ENCODE measurements at regions of chr6 and their contacts with region 1.

Region 1: DNA sequence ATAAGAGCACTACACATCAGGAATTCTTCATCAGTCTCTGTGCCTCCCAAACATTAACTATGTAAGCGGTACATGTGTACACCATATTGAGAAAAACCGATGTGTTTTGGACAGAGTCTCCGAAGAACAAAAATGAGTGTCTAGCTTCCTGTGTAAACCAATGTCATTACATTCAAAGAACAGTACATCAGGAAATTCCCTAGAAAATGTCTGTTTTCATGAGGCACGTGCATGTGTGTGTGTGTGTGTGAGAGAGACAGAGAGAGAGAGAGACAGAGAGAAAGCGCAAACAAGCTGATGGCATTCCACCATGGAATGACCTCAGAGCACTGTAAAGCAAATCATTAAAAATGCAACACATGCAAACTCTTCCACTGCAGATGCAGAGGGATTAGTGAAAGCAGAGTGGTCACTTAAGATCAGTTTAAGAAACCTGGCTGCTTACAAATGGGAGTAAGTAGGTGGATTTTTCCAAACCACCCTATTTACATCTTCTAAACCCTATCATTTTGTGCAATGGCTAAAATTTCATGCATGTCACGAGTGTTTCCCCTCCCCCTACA is 133.9 kb downstream of the HIVEP2 start:
- DNase-seq: no peak
- ATAC-seq: no peak

Region 2: GRCh38 chr6:142763205-142763604 is 47.8 kb before region 1 on chr6:
- intact Hi-C with region 1: loop called (anchors 5 kb)
- DNase-seq: no peak
- ATAC-seq: no peak

Region 3: GRCh38 chr6:142845624-142846458 is 34.8 kb after region 1 on chr6:
- intact Hi-C with region 1: no loop called
- DNase-seq: peak; percentile 95
- ATAC-seq: peak; percentile 95

Region 4: DNA sequence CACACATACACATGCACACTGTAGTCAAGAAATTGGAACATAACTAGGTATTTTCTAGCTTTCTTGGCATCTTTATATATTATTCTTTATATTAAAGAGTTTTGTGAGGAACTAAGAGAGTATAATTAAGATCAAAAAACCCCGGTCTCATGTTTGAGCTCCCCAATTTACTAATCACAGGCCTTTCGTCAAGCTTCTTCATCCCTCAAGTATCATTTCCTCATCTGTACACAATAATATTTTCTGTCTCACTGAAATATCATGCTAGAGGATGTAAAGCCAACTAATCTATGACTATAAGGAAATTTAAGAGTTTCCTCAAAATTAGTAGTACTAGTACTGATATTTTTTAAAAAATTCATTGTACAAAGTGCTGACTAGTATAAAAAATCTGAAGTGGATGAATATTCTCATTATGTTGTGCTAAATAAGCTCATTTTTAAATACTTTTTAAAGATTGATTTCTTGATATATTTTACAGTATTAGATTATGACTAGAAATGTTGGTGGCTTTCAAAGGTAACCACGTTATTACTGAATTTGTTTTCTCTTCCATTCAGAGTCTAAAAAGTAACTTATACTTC is 667.5 kb after region 1 on chr6:
- intact Hi-C with region 1: no loop called
- DNase-seq: no peak
- ATAC-seq: no peak